Heart left ventricle (tissue), 16 donors: ENCODE measurements at regions of chr7 and their contacts with region 1.

Region 1: DNA sequence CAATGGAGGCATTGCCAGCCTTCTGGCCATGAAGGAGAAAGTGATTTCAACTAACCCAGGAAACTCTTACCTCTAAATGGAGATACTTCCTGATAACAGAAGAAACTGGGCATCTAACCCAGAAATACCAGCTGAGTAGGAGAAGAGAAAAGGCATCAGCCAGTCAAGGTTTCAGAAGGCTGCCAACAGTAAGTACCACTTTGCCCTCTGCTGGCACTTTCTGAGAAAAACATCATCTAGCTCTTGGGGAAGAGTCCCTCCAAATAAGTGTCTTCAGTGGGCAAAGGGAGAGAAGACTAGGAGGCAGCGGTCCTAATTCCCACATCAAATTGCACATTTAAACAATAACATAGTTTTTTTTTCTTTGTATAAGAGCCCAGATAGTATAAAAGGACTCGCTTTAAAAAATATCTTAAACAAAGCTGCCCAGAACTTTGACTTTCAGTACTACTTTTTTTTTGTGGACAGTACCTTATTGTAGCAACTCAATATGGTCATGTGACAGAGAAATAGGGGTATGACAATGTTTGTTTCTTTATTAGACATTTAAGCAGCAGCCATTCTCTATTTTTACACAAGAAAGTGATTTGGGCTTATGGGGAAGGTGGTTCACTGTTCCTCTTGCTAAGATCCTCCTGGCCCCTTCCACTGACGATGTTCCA is 157.3 kb downstream of the CTTNBP2 start:
- DNase-seq: no peak
- ATAC-seq: peak in 1 of 4 donors; percentile 45
- H3K4me3 ChIP-seq: no peak overlapping the region
- H3K27ac ChIP-seq: no peak overlapping the region
- H3K4me1 ChIP-seq: no peaks in the 10 kb centered on the region
- H3K27me3 ChIP-seq: no peaks in the 10 kb centered on the region
- CTCF ChIP-seq: peak in 9 of 12 donors; percentile 18 to 52 (median 35)
- POLR2A ChIP-seq: no peak

Region 2: GRCh38 chr7:117399820-117400422 is 316.0 kb before region 1 on chr7:
- intact Hi-C with region 1: loop called in 2 of 10 experiments (anchors 5 to 10 kb)
- DNase-seq: no peak
- ATAC-seq: no peak
- H3K4me3 ChIP-seq: no peak overlapping the region
- H3K27ac ChIP-seq: no peak overlapping the region
- H3K4me1 ChIP-seq: no peaks in the 10 kb centered on the region
- H3K27me3 ChIP-seq: no peaks in the 10 kb centered on the region
- CTCF ChIP-seq: peak in 11 of 12 donors; percentile 18 to 48 (median 31)
- POLR2A ChIP-seq: no peak

Region 3: GRCh38 chr7:117458977-117459583 is 256.8 kb before region 1 on chr7:
- intact Hi-C with region 1: loop called in 9 of 10 experiments (anchors 2 to 10 kb)
- DNase-seq: no peak
- ATAC-seq: no peak
- H3K4me3 ChIP-seq: no peak overlapping the region
- H3K27ac ChIP-seq: no peak overlapping the region
- H3K4me1 ChIP-seq: no peaks in the 10 kb centered on the region
- H3K27me3 ChIP-seq: no peaks in the 10 kb centered on the region
- CTCF ChIP-seq: peak; percentile 32 to 65 (median 52)
- POLR2A ChIP-seq: no peak

Region 4: GRCh38 chr7:117808341-117808757 is 92.4 kb after region 1 on chr7:
- intact Hi-C with region 1: no loop called
- DNase-seq: peak in 4 of 5 donors; percentile 30 to 75 (median 45)
- ATAC-seq: peak; percentile 58 to 89 (median 78)
- H3K4me3 ChIP-seq: peak overlapping the region in 3 of 12 donors; percentile 2 to 14 (median 3)
- H3K27ac ChIP-seq: peak overlapping the region in 3 of 12 donors; percentile 10 to 29 (median 22)
- H3K4me1 ChIP-seq: peaks cover 0 to 25% (median 19%) of the 10 kb centered on the region in 12 donors
- H3K27me3 ChIP-seq: no peaks in the 10 kb centered on the region
- CTCF ChIP-seq: no peak
- POLR2A ChIP-seq: no peak

Region 5: DNA sequence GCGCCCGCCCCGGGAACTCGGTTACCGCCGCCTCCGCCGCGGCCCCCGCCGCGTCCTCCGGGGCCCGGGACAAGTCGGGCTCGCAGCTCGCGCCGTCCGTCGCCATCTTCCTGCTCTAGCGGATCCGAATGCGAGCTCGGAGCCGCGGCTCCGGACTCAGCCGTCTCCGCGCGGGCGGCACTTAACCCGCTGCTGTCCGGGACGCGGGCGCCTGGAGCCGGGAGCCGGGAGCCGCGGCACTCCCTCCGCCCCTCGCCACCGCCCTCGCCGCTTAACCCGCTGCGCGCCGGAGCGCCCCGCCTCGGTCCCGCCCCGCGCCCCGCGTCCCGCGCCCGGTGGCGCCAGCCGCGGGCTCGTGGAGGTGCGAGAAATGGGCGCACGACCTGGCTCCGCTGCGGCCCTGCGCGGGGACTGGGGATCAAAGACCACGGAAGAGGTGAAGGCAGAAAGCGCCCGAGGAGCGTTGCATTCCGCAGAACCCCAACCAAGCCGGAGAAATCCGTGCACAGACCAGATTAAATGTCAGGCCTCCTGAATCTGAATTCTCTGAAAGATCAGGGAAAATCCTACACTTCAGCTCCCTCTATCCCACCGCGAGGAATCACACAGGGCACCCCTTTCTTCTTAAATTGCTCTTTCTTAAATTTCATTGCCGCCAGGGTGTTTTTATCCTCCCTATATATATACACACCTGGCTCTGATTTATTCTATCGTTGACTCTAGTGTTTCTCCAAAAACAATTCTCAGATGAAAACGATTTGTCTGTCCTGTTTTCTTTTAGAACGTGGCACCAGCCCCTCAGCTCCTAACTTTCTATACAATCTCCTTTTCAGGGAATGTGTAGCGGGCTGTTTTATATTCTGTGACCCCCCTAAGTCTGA is 157.6 kb after region 1 on chr7 and contains the start of gene CTTNBP2:
- intact Hi-C with region 1: no loop called
- DNase-seq: peak; percentile 45 to 77 (median 56)
- ATAC-seq: peak; percentile 35 to 89 (median 70)
- H3K4me3 ChIP-seq: peak within 1 kb of the TSS; percentile 60 to 95 (median 80)
- H3K27ac ChIP-seq: peak within 1 kb of the TSS in 7 of 12 donors; percentile 8 to 70 (median 61)
- H3K4me1 ChIP-seq: peaks cover 0 to 20% (median 0%) of the 10 kb centered on the region in 12 donors
- H3K27me3 ChIP-seq: peaks cover 0 to 51% (median 0%) of the 10 kb centered on the region in 9 donors
- CTCF ChIP-seq: peak in 3 of 12 donors; percentile 21 to 30 (median 22)
- POLR2A ChIP-seq: no peak
- total RNA-seq, gene CTTNBP2: 0.31 to 3.9 (median 0.95) TPM